GM12878 (cell line): ENCODE measurements at regions of chr6 and their contacts with region 1.

Region 1: GRCh38 chr6:43714311-43715055 is 26.9 kb upstream of the MRPS18A start:
- DNase-seq: no peak
- ATAC-seq: peak; percentile 54
- H3K4me3 ChIP-seq: peak overlapping the region; percentile 41
- H3K27ac ChIP-seq: peak overlapping the region; percentile 75
- H3K4me1 ChIP-seq: peaks cover 33% of the 10 kb centered on the region
- H3K27me3 ChIP-seq: no peaks in the 10 kb centered on the region
- CTCF ChIP-seq: no peak
- EP300 ChIP-seq: no peak
- POLR2A ChIP-seq: no peak
- RAD21 ChIP-seq: no peak

Region 2: GRCh38 chr6:43702534-43703440 is 11.7 kb before region 1 on chr6:
- CTCF ChIA-PET with region 1: interaction called, 11 read pairs
- POLR2A ChIA-PET with region 1: interaction called, 24 read pairs
- RAD21 ChIA-PET with region 1: interaction called, 12 read pairs
- SMC1A ChIA-PET with region 1: interaction called, 17 read pairs
- in situ Hi-C with region 1: no loop called
- intact Hi-C with region 1: no loop called
- DNase-seq: no peak
- ATAC-seq: peak; percentile 54
- H3K4me3 ChIP-seq: no peak overlapping the region
- H3K27ac ChIP-seq: no peak overlapping the region
- H3K4me1 ChIP-seq: peaks cover 36% of the 10 kb centered on the region
- H3K27me3 ChIP-seq: no peaks in the 10 kb centered on the region
- CTCF ChIP-seq: no peak
- EP300 ChIP-seq: no peak
- POLR2A ChIP-seq: no peak
- RAD21 ChIP-seq: no peak